ENCODE measurements at regions of chr3 and their contacts with region 1.

Region 1: GRCh38 chr3:12135029-12135657 is 23.6 kb downstream of the TIMP4 start:
- DNase-seq: peak; percentile 76
- ATAC-seq: peak; percentile 87
- H3K4me3 Mint-ChIP-seq: no peak overlapping the region
- H3K27ac Mint-ChIP-seq: no peak overlapping the region
- H3K4me1 Mint-ChIP-seq: peaks cover 8% of the 10 kb centered on the region
- H3K27me3 Mint-ChIP-seq: peaks cover 37% of the 10 kb centered on the region

Region 2: GRCh38 chr3:12148183-12148940 is 13.2 kb after region 1 on chr3:
- CTCF ChIA-PET with region 1: interaction called, 10 read pairs
- DNase-seq: no peak
- ATAC-seq: no peak
- H3K4me3 Mint-ChIP-seq: no peak overlapping the region
- H3K27ac Mint-ChIP-seq: no peak overlapping the region
- H3K4me1 Mint-ChIP-seq: no peaks in the 10 kb centered on the region
- H3K27me3 Mint-ChIP-seq: peaks cover 21% of the 10 kb centered on the region

Region 3: DNA sequence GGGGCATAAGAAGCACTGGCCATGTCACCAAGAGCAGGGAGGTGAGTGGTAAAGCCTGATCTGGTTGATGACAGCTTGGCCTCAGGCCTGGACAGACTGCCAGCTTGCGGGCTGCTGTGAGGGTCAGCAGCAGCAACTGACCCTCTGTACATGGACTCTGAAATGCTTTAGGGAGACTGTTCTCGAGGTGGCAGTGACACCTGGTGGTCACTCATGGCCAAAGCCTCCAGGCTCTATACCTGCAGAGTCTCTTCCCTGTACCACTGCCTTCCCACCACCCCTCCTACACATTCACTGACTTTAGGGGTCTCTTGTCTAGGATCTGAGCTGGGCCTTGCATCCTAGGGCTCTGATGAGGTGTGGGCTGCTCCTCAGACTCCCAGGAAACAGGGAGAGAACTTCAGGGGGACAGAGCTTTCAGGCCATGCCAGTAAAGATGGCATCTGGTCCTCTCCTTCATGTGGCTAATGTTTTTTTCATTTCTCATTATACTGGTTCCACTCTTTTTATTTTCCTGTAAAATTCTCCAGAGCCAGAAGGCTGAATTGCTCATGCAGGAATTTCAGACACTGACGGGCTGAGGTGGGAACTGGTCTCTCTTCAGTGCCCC is 40.8 kb after region 1 on chr3:
- CTCF ChIA-PET with region 1: interaction called, 53 read pairs
- DNase-seq: peak; percentile 59
- ATAC-seq: peak; percentile 67
- H3K4me3 Mint-ChIP-seq: no peak overlapping the region
- H3K27ac Mint-ChIP-seq: no peak overlapping the region
- H3K4me1 Mint-ChIP-seq: peaks cover 6% of the 10 kb centered on the region
- H3K27me3 Mint-ChIP-seq: peaks cover under 1% of the 10 kb centered on the region

Region 4: DNA sequence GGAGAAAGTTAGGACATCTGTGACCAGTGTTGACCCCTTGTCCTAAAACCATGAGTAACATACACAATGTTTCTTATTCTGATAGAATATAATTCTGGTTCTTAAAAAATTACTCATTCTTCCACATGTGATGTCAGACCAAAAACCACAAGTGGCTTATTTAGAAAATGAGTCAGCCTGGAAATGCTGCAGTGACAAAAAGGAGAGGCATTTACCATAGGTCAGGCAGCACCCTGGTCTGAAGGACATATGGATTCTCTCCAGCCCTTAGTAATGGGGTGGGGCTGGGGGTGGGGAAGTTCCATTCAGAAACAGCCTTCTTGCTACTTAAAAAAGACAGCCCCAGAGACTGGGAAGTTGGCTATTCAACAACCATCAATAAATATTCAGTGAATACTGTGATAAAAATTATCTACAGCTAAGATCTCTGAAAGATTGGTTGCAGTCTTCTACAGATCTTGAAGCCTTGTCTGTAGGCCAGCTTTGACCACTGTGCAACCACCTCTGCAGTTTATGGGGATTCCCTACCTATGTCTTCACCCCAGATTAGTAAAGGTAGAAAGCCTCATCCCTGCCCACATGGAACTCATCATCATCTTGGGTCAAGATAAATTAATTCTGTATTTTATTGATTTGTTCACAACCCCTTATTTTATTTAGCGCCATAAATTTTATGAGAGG is 58.5 kb after region 1 on chr3:
- CTCF ChIA-PET with region 1: interaction called, 75 read pairs
- DNase-seq: peak; percentile 72
- ATAC-seq: peak; percentile 74
- H3K4me3 Mint-ChIP-seq: peak overlapping the region; percentile 4
- H3K27ac Mint-ChIP-seq: peak overlapping the region; percentile 90
- H3K4me1 Mint-ChIP-seq: peaks cover 61% of the 10 kb centered on the region
- H3K27me3 Mint-ChIP-seq: peaks cover 2% of the 10 kb centered on the region

Region 5: GRCh38 chr3:12484198-12484974 is 349.2 kb after region 1 on chr3 and contains the start of gene TSEN2:
- CTCF ChIA-PET with region 1: interaction called, 194 read pairs
- DNase-seq: peak; percentile 97
- ATAC-seq: peak; percentile 98
- H3K4me3 Mint-ChIP-seq: peak within 1 kb of the TSS; percentile 95
- H3K27ac Mint-ChIP-seq: peak within 1 kb of the TSS; percentile 92
- H3K4me1 Mint-ChIP-seq: peaks cover 31% of the 10 kb centered on the region
- H3K27me3 Mint-ChIP-seq: no peaks in the 10 kb centered on the region
- total RNA-seq, gene TSEN2: 12.6 to 13.0 TPM